ENCODE measurements at regions of chr15 and their contacts with region 1.

Region 1: DNA sequence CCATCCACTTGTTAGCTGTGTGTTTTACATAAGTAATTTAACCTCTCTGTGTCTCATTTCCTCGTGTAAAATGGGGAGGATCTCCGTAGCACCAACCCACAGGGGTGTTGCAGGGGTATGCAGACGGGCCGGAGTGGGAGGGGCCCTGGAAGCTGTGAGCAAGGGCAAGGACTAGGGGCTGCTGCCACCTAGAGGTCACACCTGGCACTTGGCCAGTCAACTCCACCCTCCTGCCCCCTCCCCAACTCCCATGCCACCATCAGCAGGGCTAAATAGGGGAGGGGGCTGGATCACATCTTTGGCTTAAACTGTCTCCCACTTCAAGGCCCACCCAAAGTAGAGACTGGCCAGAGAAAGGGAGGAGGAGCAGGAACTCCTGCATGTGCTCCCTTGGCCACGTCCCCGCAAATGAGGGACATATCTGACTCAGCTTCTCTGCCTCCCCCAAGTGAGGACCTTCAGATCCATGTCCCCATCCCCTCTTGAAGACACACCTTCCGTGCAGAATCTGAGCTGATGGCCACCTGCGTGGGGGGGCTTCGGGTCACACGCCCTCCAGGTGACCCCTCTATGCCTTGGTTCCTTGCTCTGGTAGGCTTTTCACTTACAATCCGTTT is 2.6 kb downstream of the CCDC9B start:
- DNase-seq: peak; percentile 83
- ATAC-seq: peak; percentile 87
- H3K4me3 Mint-ChIP-seq: no peak overlapping the region
- H3K27ac Mint-ChIP-seq: no peak overlapping the region
- H3K4me1 Mint-ChIP-seq: peaks cover 24% of the 10 kb centered on the region
- H3K27me3 Mint-ChIP-seq: no peaks in the 10 kb centered on the region

Region 2: GRCh38 chr15:40217159-40217824 is 120.9 kb before region 1 on chr15:
- CTCF ChIA-PET with region 1: interaction called, 13 read pairs
- POLR2A ChIA-PET with region 1: no interaction called
- DNase-seq: peak; percentile 62
- ATAC-seq: peak; percentile 86
- H3K4me3 Mint-ChIP-seq: no peak overlapping the region
- H3K27ac Mint-ChIP-seq: no peak overlapping the region
- H3K4me1 Mint-ChIP-seq: no peaks in the 10 kb centered on the region
- H3K27me3 Mint-ChIP-seq: no peaks in the 10 kb centered on the region

Region 3: GRCh38 chr15:40307421-40308211 is 30.5 kb before region 1 on chr15 and contains the start of gene PLCB2:
- CTCF ChIA-PET with region 1: interaction called, 326 read pairs
- POLR2A ChIA-PET with region 1: interaction called, 13 read pairs
- DNase-seq: peak; percentile 82
- ATAC-seq: peak; percentile 81
- H3K4me3 Mint-ChIP-seq: peak within 1 kb of the TSS; percentile 99
- H3K27ac Mint-ChIP-seq: peak within 1 kb of the TSS; percentile 98
- H3K4me1 Mint-ChIP-seq: peaks cover 38% of the 10 kb centered on the region
- H3K27me3 Mint-ChIP-seq: peaks cover 13% of the 10 kb centered on the region
- total RNA-seq, gene PLCB2: 133 to 160 TPM

Region 4: GRCh38 chr15:40352281-40352901 is 14.2 kb after region 1 on chr15:
- CTCF ChIA-PET with region 1: interaction called, 32 read pairs
- POLR2A ChIA-PET with region 1: interaction called, 3 read pairs
- DNase-seq: no peak
- ATAC-seq: no peak
- H3K4me3 Mint-ChIP-seq: no peak overlapping the region
- H3K27ac Mint-ChIP-seq: no peak overlapping the region
- H3K4me1 Mint-ChIP-seq: no peaks in the 10 kb centered on the region
- H3K27me3 Mint-ChIP-seq: peaks cover 11% of the 10 kb centered on the region

Region 5: DNA sequence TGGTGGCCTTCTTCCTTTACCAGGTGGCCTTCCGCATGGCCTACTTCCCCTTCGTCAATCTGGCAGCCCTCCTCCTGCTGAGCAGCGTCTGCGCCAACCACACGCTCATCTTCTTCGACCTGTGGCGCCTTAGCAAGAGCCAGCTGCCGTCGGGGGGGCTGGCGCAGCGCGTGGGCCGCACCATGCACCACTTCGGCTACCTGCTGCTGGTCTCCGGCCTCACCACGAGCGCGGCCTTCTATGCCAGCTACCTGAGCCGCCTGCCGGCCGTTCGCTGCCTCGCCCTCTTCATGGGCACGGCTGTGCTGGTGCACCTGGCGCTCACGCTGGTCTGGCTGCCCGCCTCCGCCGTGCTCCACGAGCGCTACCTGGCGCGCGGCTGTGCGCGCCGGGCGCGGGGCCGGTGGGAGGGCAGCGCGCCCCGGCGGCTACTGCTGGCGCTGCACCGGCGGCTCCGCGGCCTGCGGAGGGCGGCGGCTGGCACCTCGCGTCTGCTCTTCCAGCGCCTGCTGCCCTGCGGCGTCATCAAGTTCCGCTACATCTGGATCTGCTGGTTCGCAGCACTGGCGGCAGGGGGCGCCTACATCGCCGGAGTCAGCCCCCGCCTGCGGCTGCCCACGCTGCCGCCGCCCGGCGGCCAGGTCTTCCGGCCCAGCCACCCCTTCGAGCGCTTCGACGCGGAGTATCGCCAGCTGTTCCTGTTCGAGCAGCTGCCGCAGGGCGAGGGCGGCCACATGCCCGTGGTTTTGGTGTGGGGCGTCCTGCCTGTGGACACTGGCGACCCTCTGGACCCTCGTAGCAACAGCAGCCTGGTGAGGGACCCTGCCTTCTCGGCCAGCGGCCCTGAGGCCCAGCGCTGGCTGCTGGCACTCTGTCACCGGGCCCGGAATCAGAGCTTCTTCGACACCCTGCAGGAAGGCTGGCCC is 29.8 kb after region 1 on chr15:
- CTCF ChIA-PET with region 1: interaction called, 51 read pairs
- POLR2A ChIA-PET with region 1: no interaction called
- DNase-seq: peak; percentile 91
- ATAC-seq: peak; percentile 95
- H3K4me3 Mint-ChIP-seq: peak overlapping the region; percentile 77
- H3K27ac Mint-ChIP-seq: peak overlapping the region; percentile 85
- H3K4me1 Mint-ChIP-seq: peaks cover 33% of the 10 kb centered on the region
- H3K27me3 Mint-ChIP-seq: peaks cover 7% of the 10 kb centered on the region

Region 6: DNA sequence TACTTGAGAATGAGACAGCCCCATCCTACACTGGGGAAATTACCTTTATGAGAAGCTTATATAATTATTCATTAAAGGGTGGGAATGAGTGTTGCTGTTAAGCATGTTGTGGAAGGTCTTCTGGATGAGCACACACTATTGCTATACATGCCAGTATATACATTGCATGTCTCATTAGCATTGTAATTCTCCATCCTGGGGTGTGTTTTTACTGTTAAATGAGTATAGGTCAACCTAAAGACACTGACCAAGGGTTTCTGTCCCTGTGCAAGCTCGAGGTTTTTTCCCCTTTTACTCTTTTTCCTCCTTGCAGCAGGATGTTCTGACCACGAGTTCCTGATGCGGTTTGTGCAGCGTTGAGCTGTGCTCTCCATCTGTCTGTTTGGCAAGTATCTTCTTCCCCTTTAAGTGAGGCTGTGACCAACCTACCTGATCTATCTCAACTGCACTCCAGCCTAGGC is 60.3 kb after region 1 on chr15:
- CTCF ChIA-PET with region 1: interaction called, 18 read pairs
- POLR2A ChIA-PET with region 1: no interaction called
- DNase-seq: peak; percentile 46
- ATAC-seq: peak; percentile 86
- H3K4me3 Mint-ChIP-seq: peak overlapping the region; percentile 61
- H3K27ac Mint-ChIP-seq: peak overlapping the region; percentile 84
- H3K4me1 Mint-ChIP-seq: peaks cover 31% of the 10 kb centered on the region
- H3K27me3 Mint-ChIP-seq: no peaks in the 10 kb centered on the region

Region 7: DNA sequence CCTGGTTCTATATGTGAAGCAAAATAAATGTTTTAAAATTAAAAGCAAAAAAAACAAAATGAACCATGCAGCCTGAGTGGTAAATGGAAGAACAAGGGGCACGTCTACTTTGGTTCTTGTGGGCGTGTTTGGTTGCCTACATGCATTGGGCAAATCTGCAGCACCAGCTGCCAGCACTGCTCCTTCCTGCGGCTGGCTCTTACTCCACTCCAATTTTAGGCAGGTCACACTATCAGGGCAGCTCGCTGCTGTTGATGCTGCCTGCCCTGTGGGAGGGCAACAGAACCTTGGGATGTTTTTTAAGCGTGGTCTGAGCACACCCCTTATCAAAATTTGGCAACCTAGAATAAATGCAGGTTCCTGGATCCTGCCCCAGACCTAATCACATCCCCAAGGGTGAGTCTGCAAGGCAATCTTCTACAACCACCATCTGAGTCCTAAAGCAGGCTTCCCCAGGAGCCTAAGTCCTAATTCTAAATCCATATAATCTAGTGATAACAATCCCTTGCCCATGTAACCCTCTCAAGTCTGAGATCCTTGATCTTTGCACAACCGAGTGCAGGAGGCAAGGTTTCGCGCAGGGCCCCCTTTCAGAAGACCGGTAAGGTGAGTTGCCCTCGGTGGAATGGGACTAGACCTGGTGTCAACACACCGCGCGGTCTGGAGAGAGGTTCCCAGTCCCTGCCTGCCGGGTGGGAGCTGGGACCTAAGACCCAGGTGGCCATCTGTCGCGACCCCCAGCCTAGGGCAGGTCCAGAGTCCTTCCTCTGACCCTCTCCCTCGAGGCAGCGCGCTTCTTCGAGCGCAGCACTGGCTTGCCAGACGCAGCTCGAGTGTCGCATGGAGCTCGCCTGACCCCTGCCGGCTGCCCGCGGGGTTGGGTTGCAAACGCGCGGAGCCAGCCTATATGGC is 83.4 kb after region 1 on chr15:
- CTCF ChIA-PET with region 1: interaction called, 82 read pairs
- POLR2A ChIA-PET with region 1: interaction called, 3 read pairs
- DNase-seq: peak; percentile 86
- ATAC-seq: peak; percentile 99
- H3K4me3 Mint-ChIP-seq: no peak overlapping the region
- H3K27ac Mint-ChIP-seq: no peak overlapping the region
- H3K4me1 Mint-ChIP-seq: peaks cover 8% of the 10 kb centered on the region
- H3K27me3 Mint-ChIP-seq: no peaks in the 10 kb centered on the region

Measured in activated CD8-positive, alpha-beta T cell treated with anti-CD3 and anti-CD28 coated beads, Interleukin-2, amount 10 ng/mL, durations not matched to agents 7 days and 5 days (primary cell).